ENCODE measurements at regions of chr4 and their contacts with region 1.

Region 1: GRCh38 chr4:39977489-39978377 is at the start of gene PDS5A:
- DNase-seq: peak; percentile 31
- H3K4me3 ChIP-seq: peak within 1 kb of the TSS; percentile 94
- H3K27me3 ChIP-seq: no peaks in the 10 kb centered on the region
- CTCF ChIP-seq: peak; percentile 62
- polyA plus RNA-seq, gene PDS5A: 17.8 and 37.7 TPM in 2 replicates

Region 2: GRCh38 chr4:39469429-39470077 is 508.2 kb before region 1 on chr4:
- CTCF ChIA-PET with region 1: interaction called, 20 read pairs
- POLR2A ChIA-PET with region 1: no interaction called
- DNase-seq: peak; percentile 57
- H3K4me3 ChIP-seq: no peak overlapping the region
- H3K27me3 ChIP-seq: no peaks in the 10 kb centered on the region
- CTCF ChIP-seq: peak; percentile 84

Region 3: DNA sequence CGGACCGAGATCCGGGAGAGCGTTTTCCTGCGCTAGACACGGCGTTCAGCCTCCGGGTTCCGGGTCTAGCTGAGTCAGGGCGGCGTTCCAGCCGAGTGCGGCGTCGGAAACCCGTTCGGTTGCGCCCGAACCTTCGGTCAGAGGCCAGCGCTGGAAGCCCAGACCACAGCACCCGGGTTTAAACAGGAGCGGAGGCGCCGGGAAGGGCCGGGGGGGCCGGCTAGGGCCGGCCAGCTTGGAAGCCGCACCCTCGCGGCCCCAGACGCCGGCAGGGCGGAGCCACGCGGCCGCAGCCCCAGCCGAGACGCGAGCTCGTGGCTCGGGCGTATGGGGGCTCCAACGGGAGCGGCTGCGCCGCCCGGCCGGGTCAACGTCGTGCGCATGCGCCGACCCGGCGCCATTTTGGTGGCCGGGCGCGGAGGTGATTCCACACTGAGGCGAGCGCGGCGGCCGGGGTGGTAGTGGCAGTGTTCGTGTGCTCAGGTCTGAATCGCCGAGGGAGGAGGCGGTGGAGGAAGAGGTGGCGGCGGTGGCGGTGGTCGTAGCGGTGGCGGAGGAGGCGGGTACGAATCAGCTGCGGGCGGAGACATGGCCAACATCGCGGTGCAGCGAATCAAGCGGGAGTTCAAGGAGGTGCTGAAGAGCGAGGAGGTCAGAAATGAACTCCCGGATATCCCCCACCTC is 279.9 kb before region 1 on chr4 and contains the start of gene UBE2K:
- CTCF ChIA-PET with region 1: interaction called, 27 read pairs
- POLR2A ChIA-PET with region 1: no interaction called
- DNase-seq: peak; percentile 37
- H3K4me3 ChIP-seq: peak within 1 kb of the TSS; percentile 99
- H3K27me3 ChIP-seq: no peaks in the 10 kb centered on the region
- CTCF ChIP-seq: no peak
- polyA plus RNA-seq, gene UBE2K: 44.1 and 67.8 TPM in 2 replicates

Region 4: GRCh38 chr4:39900966-39901365 is 76.8 kb before region 1 on chr4:
- CTCF ChIA-PET with region 1: no interaction called
- POLR2A ChIA-PET with region 1: no interaction called
- DNase-seq: no peak
- H3K4me3 ChIP-seq: no peak overlapping the region
- H3K27me3 ChIP-seq: no peaks in the 10 kb centered on the region
- CTCF ChIP-seq: no peak

Region 5: DNA sequence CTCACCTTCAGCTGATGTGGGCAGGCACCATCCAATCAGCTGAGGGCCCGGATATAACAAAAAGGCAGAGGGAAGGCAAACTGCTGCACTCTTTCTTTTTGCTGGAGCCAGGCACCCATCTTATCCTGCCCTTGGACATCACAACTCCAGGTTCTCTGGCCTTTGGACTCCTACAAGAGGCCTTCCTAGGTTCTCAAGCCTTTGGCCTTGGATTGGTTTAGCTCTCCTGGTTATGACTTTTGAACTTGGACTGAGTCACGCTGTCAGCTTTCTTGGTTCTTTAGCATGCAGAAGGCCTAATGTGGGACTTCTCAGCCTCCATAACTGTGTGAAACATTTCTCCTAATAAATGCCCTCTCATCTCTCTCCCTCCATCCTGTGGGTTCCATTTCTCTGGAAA is 55.9 kb after region 1 on chr4:
- CTCF ChIA-PET with region 1: no interaction called
- POLR2A ChIA-PET with region 1: no interaction called
- DNase-seq: no peak
- H3K4me3 ChIP-seq: no peak overlapping the region
- H3K27me3 ChIP-seq: no peaks in the 10 kb centered on the region
- CTCF ChIP-seq: no peak

Measured in BJ (cell line).